Sciatic nerve (tissue), 2 donors: ENCODE measurements at regions of chr19 and their contacts with region 1.

Region 1: GRCh38 chr19:54023191-54023590 is 31.8 kb downstream of the CACNG6 start:
- DNase-seq: no peak
- ATAC-seq: no peak

Region 2: GRCh38 chr19:53844849-53845246 is 178.3 kb before region 1 on chr19:
- intact Hi-C with region 1: loop called (anchors 5 kb)
- DNase-seq: no peak
- ATAC-seq: no peak

Region 3: DNA sequence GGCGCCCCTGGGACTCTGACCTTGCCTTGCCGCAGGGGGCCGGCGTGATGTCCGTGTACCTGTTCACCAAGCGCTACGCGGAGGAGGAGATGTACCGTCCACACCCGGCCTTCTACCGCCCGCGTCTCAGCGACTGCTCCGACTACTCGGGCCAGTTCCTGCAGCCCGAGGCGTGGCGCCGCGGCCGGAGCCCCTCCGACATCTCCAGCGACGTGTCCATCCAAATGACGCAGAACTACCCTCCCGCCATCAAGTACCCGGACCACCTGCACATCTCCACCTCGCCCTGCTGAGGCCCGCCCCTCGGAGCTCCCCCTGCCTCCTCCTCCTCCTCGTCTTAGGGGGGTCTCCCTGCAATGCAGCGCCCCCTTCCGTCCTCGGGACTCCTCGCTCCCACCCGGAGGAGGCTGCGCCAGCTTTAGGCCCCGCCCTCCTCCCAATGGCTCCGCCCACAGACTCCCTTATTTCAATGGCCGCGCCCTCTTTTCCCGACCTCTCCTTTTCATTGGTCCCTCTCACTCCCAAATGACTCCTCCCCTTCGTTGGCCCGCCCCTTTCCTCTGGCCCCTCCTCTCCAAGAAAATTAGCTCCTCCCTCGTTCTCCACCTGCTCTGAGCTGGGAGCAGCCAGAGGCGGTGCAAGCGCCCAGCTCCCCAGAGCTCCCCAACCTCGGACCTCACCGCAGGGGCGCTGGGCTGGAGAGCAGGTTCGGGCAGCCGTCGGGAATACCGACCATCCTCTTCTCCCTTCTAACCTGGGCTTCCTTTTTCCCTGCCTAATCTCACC is 81.0 kb before region 1 on chr19:
- intact Hi-C with region 1: no loop called
- DNase-seq: no peak
- ATAC-seq: no peak

Region 4: DNA sequence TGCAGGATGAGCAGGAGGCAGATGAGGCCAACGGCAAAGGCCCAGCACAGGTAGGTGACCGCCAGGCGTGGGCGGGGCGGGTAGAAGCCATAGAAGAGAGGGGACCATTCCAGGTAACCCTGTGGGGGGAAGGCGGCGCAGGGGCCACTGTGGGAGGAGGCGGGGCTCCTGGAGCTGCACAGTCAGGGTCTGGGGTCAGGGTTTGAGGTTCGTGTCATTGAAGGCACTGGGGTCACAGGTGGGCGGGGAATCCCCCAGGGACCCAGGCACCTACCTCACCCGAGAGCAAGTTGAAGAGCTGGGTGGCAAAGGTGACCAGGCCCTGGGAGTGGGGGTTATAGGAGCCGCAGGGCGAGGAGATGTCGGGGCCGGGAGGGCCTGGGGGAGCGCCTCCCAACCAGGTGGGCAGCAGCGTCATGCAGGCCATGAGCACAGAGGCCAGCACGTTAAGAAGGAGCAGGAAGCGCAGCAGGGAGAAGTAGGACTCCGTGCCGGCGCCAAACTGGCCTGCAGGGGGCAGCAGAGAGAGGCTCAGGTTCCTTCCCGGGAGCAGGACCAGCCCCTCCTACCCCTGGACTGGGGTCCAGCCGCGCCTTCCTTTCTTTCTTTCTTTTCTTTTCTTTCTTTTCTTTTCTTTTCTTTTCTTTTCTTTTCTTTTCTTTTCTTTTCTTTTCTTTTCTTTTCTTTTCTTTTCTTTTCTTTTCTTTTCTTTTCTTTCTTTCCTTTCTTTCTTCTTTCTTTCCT is 145.2 kb after region 1 on chr19:
- intact Hi-C with region 1: no loop called
- DNase-seq: peak; percentile 97
- ATAC-seq: peak; percentile 88